BJ (cell line): ENCODE measurements at regions of chr1 and their contacts with region 1.

Region 1: DNA sequence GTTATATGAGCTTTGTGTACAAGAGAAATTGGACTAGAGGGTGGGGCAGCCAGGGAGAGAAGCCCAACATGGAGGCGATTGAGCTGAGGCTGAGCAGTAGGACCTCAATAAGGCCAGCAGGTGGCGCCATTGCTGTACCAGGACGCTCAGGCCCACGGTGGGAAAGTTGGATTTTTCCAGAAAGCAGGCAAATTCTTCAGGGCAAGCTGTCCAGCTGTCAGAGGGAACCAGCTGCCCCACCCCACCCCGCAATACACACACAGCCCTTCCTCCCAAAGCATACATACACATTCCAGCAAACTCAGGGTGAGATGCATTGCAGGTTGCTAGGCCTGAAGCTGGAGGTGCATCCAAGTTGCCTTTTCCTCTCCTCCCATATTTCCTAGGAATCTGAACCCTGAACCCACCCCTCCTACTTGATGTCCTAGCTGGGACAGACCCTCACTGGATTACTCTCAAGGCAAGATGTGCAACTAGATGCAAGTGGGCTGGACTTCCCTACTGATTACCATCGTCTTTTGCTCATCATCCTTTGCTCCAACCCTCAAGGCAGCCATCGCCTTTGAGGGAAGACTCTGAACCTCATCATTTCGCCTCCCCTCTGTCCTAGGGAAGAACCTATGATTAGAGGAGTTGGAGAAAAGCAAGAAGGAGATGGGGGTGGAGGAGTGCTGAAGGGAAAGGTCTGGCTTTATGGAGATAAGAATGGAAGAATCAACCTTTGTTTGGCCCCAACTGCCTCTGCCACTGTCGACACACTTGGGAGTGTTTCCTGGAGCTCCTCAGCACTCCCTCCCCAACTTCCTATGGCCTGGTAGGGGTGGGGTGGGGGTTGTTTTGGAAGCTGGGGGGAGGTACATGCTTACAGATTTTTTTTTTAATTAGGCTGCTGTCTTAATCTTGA is 25.5 kb downstream of the CD34 start:
- DNase-seq: peak; percentile 39
- H3K4me3 ChIP-seq: no peak overlapping the region
- H3K27me3 ChIP-seq: no peaks in the 10 kb centered on the region; the same call in 1 of the 2 replicates
- CTCF ChIP-seq: peak; percentile 94

Region 2: DNA sequence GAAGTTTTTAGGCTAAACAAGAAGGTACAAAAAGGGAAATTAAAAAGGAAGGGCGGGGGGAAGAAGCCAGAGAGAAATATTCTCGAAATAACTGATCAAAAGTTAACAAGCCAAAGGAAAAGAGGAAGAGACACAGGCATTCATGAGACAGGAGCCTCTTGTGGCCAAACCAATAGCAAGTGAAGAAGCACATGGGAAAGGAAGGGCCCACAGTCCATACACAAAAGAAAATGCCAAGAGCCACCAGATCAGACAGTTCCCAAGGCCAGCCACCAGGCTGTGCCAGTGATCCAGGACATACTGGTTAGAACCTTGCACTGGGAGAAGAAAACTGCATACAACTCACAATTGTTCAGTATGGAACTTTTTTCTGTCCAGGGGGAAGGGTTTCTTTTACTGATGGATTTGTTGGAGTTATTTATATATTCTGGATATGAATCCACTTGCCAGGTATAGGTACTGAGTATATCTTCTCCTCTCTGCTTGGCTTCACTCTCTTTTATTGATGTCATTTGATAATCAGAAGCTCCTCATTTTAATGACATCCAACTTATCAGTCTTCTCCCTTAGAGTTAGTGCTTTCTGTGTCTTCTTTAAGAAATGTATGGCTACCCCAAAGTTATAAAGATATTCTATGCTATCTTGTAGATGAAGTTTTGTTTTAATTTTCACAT is 56.8 kb before region 1 on chr1:
- CTCF ChIA-PET with region 1: interaction called, 51 read pairs
- POLR2A ChIA-PET with region 1: no interaction called
- DNase-seq: peak; percentile 59
- H3K4me3 ChIP-seq: no peak overlapping the region
- H3K27me3 ChIP-seq: no peaks in the 10 kb centered on the region
- CTCF ChIP-seq: peak; percentile 89

Region 3: GRCh38 chr1:207868774-207869721 is 16.3 kb before region 1 on chr1:
- CTCF ChIA-PET with region 1: interaction called, 192 read pairs
- POLR2A ChIA-PET with region 1: no interaction called
- DNase-seq: no peak
- H3K4me3 ChIP-seq: peak overlapping the region; percentile 75
- H3K27me3 ChIP-seq: no peaks in the 10 kb centered on the region
- CTCF ChIP-seq: peak; percentile 65

Region 4: GRCh38 chr1:207952617-207953542 is 67.5 kb after region 1 on chr1:
- CTCF ChIA-PET with region 1: interaction called, 17 read pairs
- POLR2A ChIA-PET with region 1: no interaction called
- DNase-seq: no peak
- H3K4me3 ChIP-seq: no peak overlapping the region
- H3K27me3 ChIP-seq: no peaks in the 10 kb centered on the region; the same call in 1 of the 2 replicates
- CTCF ChIP-seq: no peak

Region 5: DNA sequence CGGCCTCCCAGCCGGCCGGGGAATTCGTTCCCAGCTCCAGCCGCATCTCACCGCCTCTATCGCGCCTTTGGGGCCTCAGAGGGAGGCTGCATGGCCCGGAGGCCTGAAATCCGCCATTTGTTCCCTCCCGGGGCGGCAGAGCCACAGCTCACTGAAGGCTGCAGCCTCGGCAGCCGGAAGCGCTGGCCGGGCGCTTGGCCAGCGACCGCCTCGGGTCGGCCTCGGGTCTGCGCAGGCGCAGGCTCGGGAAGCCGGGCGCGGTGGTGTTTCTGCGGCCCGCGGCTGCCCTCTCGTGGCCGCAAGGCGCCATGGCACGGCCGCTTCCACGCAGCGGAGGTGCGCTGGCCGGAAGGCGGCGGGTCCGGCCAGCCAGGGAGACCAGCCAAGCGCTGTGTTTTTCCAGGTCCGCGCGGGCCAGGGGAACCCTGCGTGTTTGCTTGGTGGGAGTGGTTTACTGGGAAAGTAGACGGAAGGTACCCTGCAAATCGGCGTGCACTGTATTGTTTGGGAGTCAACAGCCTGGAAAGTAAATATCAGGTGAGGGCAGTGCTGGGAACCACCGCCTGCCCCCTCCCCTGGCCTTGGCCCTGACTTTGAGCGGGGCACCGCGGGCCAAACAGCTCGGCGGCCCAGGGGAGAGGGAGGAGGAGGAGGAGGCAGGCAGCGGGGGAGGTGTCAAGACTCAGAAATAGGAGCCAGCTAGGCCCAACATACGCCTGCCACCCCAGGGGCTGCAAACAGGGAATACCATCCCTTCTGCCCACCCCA is 78.2 kb after region 1 on chr1:
- CTCF ChIA-PET with region 1: interaction called, 206 read pairs
- POLR2A ChIA-PET with region 1: interaction called, 9 read pairs
- DNase-seq: no peak
- H3K4me3 ChIP-seq: peak overlapping the region; percentile 46
- H3K27me3 ChIP-seq: no peaks in the 10 kb centered on the region
- CTCF ChIP-seq: peak; percentile 64